Endothelial cell of umbilical vein (primary cell): ENCODE measurements at regions of chr10 and their contacts with region 1.

Region 1: GRCh38 chr10:101311185-101312066 is 42.5 kb upstream of the BTRC start:
- DNase-seq: no peak
- H3K4me3 ChIP-seq: no peak overlapping the region
- H3K27ac ChIP-seq: no peak overlapping the region
- H3K4me1 ChIP-seq: no peaks in the 10 kb centered on the region
- H3K27me3 ChIP-seq: peaks cover 35 to 46% of the 10 kb centered on the region in 2 experiments
- CTCF ChIP-seq: no peak
- POLR2A ChIP-seq: no peak

Region 2: DNA sequence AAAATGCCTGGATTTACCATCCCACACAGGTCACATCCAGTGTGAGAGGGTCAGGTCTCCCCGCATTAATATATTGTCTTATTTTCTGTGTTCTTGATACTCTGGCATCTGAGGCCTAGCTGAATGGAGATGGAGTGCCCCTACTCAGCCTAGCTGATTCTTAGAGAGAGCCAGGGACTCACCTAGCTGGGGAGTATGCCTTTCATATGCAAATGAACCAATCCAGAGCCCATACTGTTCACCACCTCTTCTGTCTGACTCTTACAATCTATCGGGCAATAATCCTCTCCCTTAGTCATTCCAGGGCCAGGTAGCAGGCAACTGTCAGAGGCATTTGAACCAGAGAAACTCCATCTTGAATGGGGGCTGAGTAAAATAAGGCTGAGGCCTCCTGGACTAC is 128.5 kb before region 1 on chr10:
- CTCF ChIA-PET with region 1: no interaction called
- POLR2A ChIA-PET with region 1: no interaction called
- dilution Hi-C with region 1: no loop called
- intact Hi-C with region 1: no loop called
- DNase-seq: no peak
- H3K4me3 ChIP-seq: no peak overlapping the region
- H3K27ac ChIP-seq: no peak overlapping the region
- H3K4me1 ChIP-seq: no peaks in the 10 kb centered on the region
- H3K27me3 ChIP-seq: peaks cover 4 to 10% of the 10 kb centered on the region in 2 experiments
- CTCF ChIP-seq: no peak
- POLR2A ChIP-seq: no peak

Region 3: GRCh38 chr10:101291331-101292193 is 19.9 kb before region 1 on chr10:
- CTCF ChIA-PET with region 1: interaction called, 10 read pairs
- POLR2A ChIA-PET with region 1: no interaction called
- dilution Hi-C with region 1: no loop called
- intact Hi-C with region 1: no loop called
- DNase-seq: peak; percentile 33
- H3K4me3 ChIP-seq: peak overlapping the region in 2 of 3 experiments; percentile 32 to 46
- H3K27ac ChIP-seq: no peak overlapping the region
- H3K4me1 ChIP-seq: peaks cover 2% of the 10 kb centered on the region
- H3K27me3 ChIP-seq: peaks cover 54 to 56% of the 10 kb centered on the region in 2 experiments
- CTCF ChIP-seq: peak; percentile 61 to 90
- POLR2A ChIP-seq: no peak

Region 4: DNA sequence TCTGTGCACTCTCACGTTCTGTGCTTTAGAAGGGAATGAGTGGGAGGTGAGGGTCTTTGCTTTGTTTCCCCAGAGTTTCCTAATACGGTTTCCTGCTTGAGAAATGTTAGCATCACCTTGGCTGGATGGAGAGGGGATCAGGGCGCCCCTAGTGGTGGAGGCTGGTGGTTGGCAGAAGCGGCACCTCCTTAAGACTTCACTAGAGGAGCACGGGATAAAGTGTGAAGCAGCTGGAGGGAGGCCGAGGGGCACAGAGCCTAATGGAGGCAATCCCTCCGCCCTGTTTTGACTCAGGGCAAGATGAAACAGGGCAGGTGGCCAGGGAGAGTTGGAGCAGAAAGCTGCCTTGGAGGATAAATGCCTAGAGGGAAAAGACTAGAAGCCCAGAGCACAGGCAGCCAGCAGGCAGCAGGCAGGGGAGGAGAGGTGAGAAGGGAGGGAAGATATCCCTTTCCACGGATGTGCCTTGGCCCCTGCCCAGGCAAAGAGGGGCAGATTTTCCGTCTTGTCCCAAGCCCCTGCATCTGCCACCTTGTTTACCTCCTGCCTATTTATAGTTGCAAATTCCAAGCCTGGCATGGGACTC is 13.4 kb before region 1 on chr10:
- CTCF ChIA-PET with region 1: interaction called, 18 read pairs
- POLR2A ChIA-PET with region 1: no interaction called
- dilution Hi-C with region 1: no loop called
- intact Hi-C with region 1: no loop called
- DNase-seq: peak; percentile 65
- H3K4me3 ChIP-seq: no peak overlapping the region
- H3K27ac ChIP-seq: no peak overlapping the region
- H3K4me1 ChIP-seq: no peaks in the 10 kb centered on the region
- H3K27me3 ChIP-seq: peaks cover 17 to 37% of the 10 kb centered on the region in 2 experiments
- CTCF ChIP-seq: peak; percentile 91 to 92
- POLR2A ChIP-seq: no peak

Region 5: GRCh38 chr10:101346177-101346576 is 34.8 kb after region 1 on chr10:
- CTCF ChIA-PET with region 1: no interaction called
- POLR2A ChIA-PET with region 1: no interaction called
- dilution Hi-C with region 1: no loop called
- intact Hi-C with region 1: no loop called
- DNase-seq: no peak
- H3K4me3 ChIP-seq: no peak overlapping the region
- H3K27ac ChIP-seq: no peak overlapping the region
- H3K4me1 ChIP-seq: no peaks in the 10 kb centered on the region
- H3K27me3 ChIP-seq: peaks cover 13 to 19% of the 10 kb centered on the region in 2 experiments
- CTCF ChIP-seq: no peak
- POLR2A ChIP-seq: no peak

Region 6: DNA sequence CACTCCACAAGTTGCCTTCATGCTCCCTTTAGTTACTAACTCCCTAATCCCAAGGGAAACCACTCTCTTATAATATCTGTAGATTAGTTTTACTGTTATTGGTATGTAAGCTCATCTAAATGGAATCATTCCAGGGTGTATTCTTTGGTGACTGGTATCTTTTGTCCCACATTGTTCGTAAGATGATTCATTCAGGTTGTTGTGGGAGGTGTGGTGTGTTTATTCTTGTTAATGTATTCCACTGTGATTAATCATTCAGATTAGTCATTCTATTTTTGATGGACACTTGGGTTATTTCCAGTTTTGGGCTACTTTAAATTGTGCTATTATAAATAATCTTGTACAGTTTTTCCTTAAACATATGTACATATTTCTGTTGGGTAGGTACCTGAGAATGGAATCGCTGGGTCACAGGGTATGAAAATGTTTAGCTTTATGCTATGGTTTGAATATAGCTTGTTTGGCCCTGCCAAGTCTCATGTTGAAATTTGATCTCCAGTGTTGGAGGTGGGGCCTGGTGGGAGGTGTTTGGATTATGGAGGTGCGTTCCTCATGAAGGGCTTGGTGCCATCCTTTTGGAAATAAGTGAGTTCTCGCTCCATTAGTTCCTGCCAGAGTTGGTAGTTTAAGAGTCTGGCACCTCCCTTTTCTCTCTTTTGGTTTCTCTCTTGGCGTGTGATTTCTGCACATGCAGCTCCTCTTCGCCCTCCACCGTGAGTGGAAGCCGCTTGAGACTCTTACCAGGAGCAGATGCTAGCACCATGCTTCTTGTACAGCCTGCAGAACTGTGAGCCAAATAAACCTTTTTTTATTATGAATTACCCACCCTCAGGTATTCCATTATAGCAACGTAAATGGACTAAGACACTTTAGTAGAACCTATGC is 56.4 kb after region 1 on chr10:
- CTCF ChIA-PET with region 1: no interaction called
- POLR2A ChIA-PET with region 1: no interaction called
- dilution Hi-C with region 1: no loop called
- intact Hi-C with region 1: no loop called
- DNase-seq: peak; percentile 90
- H3K4me3 ChIP-seq: no peak overlapping the region
- H3K27ac ChIP-seq: peak overlapping the region; percentile 57
- H3K4me1 ChIP-seq: peaks cover 16% of the 10 kb centered on the region
- H3K27me3 ChIP-seq: no peaks in the 10 kb centered on the region
- CTCF ChIP-seq: no peak
- POLR2A ChIP-seq: no peak

Region 7: GRCh38 chr10:101485681-101486554 is 174.5 kb after region 1 on chr10:
- CTCF ChIA-PET with region 1: no interaction called
- POLR2A ChIA-PET with region 1: no interaction called
- dilution Hi-C with region 1: no loop called
- intact Hi-C with region 1: no loop called
- DNase-seq: no peak
- H3K4me3 ChIP-seq: no peak overlapping the region
- H3K27ac ChIP-seq: no peak overlapping the region
- H3K4me1 ChIP-seq: no peaks in the 10 kb centered on the region
- H3K27me3 ChIP-seq: no peaks in the 10 kb centered on the region
- CTCF ChIP-seq: no peak
- POLR2A ChIP-seq: no peak